Activated CD4-positive, alpha-beta T cell treated with anti-CD3 and anti-CD28 coated beads, Interleukin-2, amount 10 ng/mL, durations not matched to agents 24 days and 14 days (primary cell): ENCODE measurements at regions of chr1 and their contacts with region 1.

Region 1: DNA sequence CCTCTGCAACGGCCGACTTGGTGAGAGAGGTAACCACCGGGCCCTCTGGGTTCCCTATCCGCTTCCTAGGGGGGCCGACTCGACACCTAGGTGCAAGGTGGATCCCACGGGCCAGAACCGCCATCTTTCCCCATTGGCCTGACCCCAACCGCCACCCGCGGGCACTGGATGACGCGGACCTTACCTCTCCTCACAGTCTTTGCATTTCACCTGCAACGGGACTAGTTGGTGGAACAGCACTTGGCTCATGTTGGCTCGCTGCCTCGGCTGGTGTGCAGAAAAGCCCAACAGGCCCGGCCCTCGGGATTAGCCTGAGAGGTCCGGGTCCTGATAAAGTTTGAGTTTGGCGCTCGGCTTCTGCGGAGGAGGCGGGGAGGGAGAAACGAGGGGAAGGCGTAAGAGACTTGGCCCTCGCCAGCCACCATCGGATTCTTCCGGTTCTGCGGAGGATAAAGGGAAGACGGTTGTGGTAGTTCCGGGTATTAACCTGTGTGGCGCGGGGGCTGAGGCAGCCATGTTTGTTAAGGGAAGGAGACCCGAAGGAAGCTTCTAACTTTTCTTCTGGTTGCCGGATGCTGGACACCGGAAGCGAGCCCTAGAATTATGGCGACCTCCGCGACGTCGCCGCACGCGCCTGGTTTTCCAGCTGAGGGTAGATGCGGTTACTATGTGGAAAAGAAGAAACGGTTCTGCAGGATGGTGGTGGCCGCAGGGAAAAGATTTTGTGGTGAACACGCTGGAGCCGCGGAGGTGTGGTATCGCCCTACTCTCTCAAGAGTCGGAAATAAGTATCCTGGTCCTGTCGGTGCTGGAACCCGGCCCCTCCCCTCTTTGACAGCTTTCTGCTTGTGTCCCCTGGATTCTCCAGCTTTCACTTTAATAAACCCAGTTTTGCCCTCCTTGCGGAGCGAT is at the starts of genes SASS6 and TRMT13:
- DNase-seq: peak; percentile 98
- H3K4me3 Mint-ChIP-seq: peak within 1 kb of the TSS; percentile 100
- H3K27ac Mint-ChIP-seq: peak within 1 kb of the TSS; percentile 97
- H3K4me1 Mint-ChIP-seq: peaks cover 38% of the 10 kb centered on the region
- H3K27me3 Mint-ChIP-seq: peaks cover 3% of the 10 kb centered on the region
- total RNA-seq, gene SASS6: 16.0 and 17.2 TPM in 2 replicates
- total RNA-seq, gene TRMT13: 24.3 and 25.5 TPM in 2 replicates

Region 2: GRCh38 chr1:99808391-99809115 is 324.3 kb before region 1 on chr1:
- intact Hi-C with region 1: loop called (anchors 1 kb)
- DNase-seq: peak; percentile 85
- H3K4me3 Mint-ChIP-seq: peak overlapping the region; percentile 22
- H3K27ac Mint-ChIP-seq: no peak overlapping the region
- H3K4me1 Mint-ChIP-seq: peaks cover 18% of the 10 kb centered on the region
- H3K27me3 Mint-ChIP-seq: peaks cover 20% of the 10 kb centered on the region

Region 3: DNA sequence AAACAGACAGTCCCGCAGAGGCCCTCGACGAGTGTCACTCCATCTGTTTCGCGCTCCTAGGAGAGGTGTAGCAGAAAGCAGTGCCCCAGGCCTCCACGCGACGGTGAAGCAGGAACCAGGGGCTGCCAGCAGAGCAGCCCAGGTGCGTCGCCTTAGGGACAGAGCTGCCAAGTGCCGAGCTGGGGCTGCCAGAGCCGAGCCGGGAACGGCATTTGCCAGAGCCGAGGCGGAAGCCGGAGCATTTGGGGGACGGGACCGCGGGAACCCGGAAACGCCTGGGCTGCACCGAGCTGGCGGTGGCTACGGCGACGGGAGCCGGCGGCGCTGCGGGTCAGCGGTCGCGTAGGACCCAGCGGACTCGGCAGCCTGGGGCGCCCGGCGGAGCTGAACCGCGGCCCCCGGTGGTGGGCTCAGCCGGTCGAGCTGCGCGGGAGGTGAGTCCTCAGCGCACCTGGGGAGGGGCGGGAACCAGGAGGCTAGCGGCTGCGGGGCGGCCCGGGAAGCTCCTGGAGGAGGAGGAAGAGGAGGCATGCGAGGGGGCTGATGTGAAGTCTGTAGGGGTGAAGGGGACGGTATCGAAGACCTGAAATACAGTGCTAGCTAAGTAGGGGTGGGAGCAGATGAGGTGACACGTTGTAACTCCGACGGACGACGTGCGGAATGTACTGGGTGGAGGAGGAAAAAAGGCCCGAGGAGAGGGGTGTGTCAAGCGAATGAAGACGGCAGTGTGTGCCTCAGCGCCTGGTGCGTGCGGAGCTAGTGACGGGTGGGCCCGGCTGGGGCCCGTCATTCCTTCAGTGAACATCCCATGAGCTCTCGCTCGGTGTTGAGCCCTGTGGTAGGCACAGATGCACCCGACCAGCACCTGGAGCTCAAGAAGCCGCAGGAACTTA is 162.8 kb before region 1 on chr1 and contains the start of gene SLC35A3:
- intact Hi-C with region 1: loop called (anchors 1 kb)
- DNase-seq: peak; percentile 94
- H3K4me3 Mint-ChIP-seq: peak within 1 kb of the TSS; percentile 97
- H3K27ac Mint-ChIP-seq: peak within 1 kb of the TSS; percentile 98
- H3K4me1 Mint-ChIP-seq: peaks cover 16% of the 10 kb centered on the region
- H3K27me3 Mint-ChIP-seq: no peaks in the 10 kb centered on the region
- total RNA-seq, gene SLC35A3: 15.7 and 17.4 TPM in 2 replicates

Region 4: GRCh38 chr1:100100202-100100601 is 32.6 kb before region 1 on chr1:
- intact Hi-C with region 1: no loop called
- DNase-seq: no peak
- H3K4me3 Mint-ChIP-seq: no peak overlapping the region
- H3K27ac Mint-ChIP-seq: no peak overlapping the region
- H3K4me1 Mint-ChIP-seq: no peaks in the 10 kb centered on the region
- H3K27me3 Mint-ChIP-seq: no peaks in the 10 kb centered on the region

Region 5: GRCh38 chr1:100265931-100266740 is 133.3 kb after region 1 on chr1 and contains the start of gene RTCA:
- intact Hi-C with region 1: loop called (anchors 1 kb)
- DNase-seq: peak; percentile 99
- H3K4me3 Mint-ChIP-seq: peak within 1 kb of the TSS; percentile 98
- H3K27ac Mint-ChIP-seq: peak within 1 kb of the TSS; percentile 96
- H3K4me1 Mint-ChIP-seq: peaks cover 34% of the 10 kb centered on the region
- H3K27me3 Mint-ChIP-seq: no peaks in the 10 kb centered on the region
- total RNA-seq, gene RTCA: 48.5 and 49.1 TPM in 2 replicates

Region 6: GRCh38 chr1:100895540-100896483 is 763.0 kb after region 1 on chr1 and contains the start of gene SLC30A7:
- intact Hi-C with region 1: loop called (anchors 1 kb)
- DNase-seq: peak; percentile 99
- H3K4me3 Mint-ChIP-seq: peak within 1 kb of the TSS; percentile 100
- H3K27ac Mint-ChIP-seq: peak within 1 kb of the TSS; percentile 100
- H3K4me1 Mint-ChIP-seq: peaks cover 36% of the 10 kb centered on the region
- H3K27me3 Mint-ChIP-seq: no peaks in the 10 kb centered on the region
- total RNA-seq, gene SLC30A7: 40.8 and 41.0 TPM in 2 replicates